ENCODE measurements at regions of chr6 and their contacts with region 1.

Region 1: DNA sequence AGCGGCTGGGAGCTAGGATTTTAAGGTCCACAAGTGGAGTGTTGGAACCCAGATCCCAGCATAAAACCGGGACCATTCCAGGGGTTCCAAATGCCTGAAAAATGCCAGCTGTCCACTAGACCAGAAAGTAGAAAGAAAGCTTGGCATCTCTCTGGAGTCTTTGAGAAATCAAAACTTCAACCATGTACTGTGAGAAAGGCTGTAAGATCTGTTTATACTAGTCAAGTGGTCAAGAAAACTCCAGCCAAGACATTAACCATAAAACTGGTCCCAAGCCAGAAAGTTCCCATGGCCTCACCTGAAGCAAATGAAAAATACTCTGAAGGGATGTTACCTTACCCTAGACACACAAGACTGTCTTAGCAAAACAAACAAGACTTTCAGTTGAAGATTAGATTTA is 112.6 kb downstream of the DCDC2 start:
- DNase-seq: no peak
- ATAC-seq: no peak
- H3K4me3 ChIP-seq: no peak overlapping the region
- H3K27ac ChIP-seq: no peak overlapping the region
- H3K4me1 ChIP-seq: no peaks in the 10 kb centered on the region
- H3K27me3 ChIP-seq: no peaks in the 10 kb centered on the region
- CTCF ChIP-seq: no peak
- POLR2A ChIP-seq: no peak
- RAD21 ChIP-seq: no peak

Region 2: DNA sequence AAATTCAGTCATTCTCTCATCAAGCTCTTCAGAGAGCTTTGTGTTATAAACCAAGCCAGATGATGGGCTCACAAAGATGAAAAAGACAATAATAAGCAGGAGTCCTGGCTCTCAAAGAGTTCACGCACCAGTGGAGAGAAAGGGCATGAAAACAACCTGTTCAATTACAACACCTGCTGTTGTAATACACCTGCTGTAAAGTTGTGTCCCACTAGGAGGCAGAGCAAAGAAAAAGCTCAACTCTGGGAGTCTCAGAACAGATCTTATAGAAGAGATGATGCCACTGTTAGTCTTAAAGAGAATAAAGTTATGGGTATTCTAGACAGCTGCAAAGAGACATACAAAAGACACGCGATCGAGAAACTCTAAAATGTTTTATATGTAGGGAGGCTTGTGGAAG is 12.0 kb after region 1 on chr6:
- CTCF ChIA-PET with region 1: no interaction called
- POLR2A ChIA-PET with region 1: no interaction called
- RAD21 ChIA-PET with region 1: interaction called in 1 of 2 experiments, 11 read pairs
- intact Hi-C with region 1: no loop called
- DNase-seq: peak; percentile 13
- ATAC-seq: peak; percentile 70
- H3K4me3 ChIP-seq: no peak overlapping the region
- H3K27ac ChIP-seq: no peak overlapping the region
- H3K4me1 ChIP-seq: no peaks in the 10 kb centered on the region
- H3K27me3 ChIP-seq: no peaks in the 10 kb centered on the region
- CTCF ChIP-seq: peak in 2 of 3 experiments; percentile 39 to 41; a peak in 3 of 6 replicates
- POLR2A ChIP-seq: no peak
- RAD21 ChIP-seq: no peak

Region 3: GRCh38 chr6:24658573-24659511 is 413.6 kb after region 1 on chr6:
- CTCF ChIA-PET with region 1: no interaction called
- POLR2A ChIA-PET with region 1: no interaction called
- RAD21 ChIA-PET with region 1: no interaction called
- intact Hi-C with region 1: no loop called
- DNase-seq: no peak
- ATAC-seq: no peak
- H3K4me3 ChIP-seq: no peak overlapping the region
- H3K27ac ChIP-seq: no peak overlapping the region
- H3K4me1 ChIP-seq: no peaks in the 10 kb centered on the region
- H3K27me3 ChIP-seq: no peaks in the 10 kb centered on the region
- CTCF ChIP-seq: no peak
- POLR2A ChIP-seq: no peak
- RAD21 ChIP-seq: no peak

Measured in HCT116 (cell line).